ENCODE measurements at regions of chr7 and their contacts with region 1.

Region 1: DNA sequence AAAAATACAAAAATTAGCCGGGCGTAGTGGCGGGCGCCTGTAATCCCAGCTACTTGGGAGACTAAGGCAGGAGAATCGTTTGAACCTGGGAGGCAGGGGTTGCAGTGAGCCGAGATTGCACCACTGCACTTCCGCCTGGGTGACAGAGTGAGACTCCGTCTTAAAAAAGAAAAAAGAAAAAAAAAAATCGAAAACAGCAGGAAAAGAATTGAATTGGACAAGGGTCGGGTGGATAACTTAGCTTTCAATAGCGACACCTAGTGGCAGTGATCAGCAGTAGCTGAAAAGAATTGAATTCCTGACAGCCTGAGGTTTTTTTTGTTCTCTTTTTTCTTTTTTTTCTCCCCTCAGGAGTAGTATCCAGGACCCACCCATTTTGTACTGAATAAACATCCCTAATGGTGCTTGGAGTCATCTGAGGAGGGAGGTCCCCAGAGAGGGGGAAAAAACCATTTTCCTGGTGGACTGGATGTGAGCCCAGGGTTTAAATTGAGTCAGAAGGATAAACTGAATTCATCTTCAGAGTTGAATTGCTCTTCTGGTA is 55.1 kb downstream of the CYCS start:
- DNase-seq: peak; percentile 32
- ATAC-seq: peak; percentile 78 to 81

Region 2: GRCh38 chr7:24819916-24820689 is 249.9 kb before region 1 on chr7:
- intact Hi-C with region 1: loop called (anchors 2 to 5 kb)
- DNase-seq: peak; percentile 87
- ATAC-seq: peak; percentile 89 to 90

Region 3: DNA sequence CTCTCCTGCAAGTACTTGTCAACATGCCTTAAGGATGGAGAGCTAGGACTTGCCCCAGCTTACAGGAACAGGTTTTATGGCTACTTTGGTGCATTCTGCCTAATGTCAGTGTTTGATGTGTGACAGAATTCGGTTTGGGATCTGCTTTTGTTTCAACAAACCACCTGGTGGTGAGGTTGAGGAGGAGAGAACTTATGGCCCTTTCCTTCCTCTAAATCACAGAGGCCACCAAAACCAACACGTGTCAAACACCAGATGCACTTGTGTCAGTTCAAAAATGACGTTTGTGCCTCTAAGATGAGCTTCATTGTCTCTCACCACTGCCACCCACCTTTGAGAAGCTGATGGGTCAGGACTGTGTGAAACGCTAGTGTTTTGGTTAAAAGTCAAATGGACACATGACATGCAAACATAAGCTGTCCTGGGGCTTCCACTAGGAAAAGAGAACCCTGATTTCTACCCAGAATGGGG is 173.9 kb before region 1 on chr7:
- intact Hi-C with region 1: loop called in 1 of 2 experiments (anchors 5 kb)
- DNase-seq: no peak
- ATAC-seq: no peak

Region 4: GRCh38 chr7:24979863-24980533 is 90.0 kb before region 1 on chr7 and contains the start of gene OSBPL3:
- intact Hi-C with region 1: loop called (anchors 2 to 5 kb)
- DNase-seq: peak; percentile 96
- ATAC-seq: peak; percentile 96 to 97
- total RNA-seq, gene OSBPL3: 8.8 to 10.0 TPM